ENCODE measurements at regions of chr12 and their contacts with region 1.

Region 1: GRCh38 chr12:70733385-70733784 is 96.2 kb upstream of the PTPRB start:
- DNase-seq: no peak
- ATAC-seq: peak in 2 of 4 donors; percentile 72 to 85
- H3K4me3 ChIP-seq: no peak overlapping the region
- H3K27ac ChIP-seq: no peak overlapping the region
- H3K4me1 ChIP-seq: no peaks in the 10 kb centered on the region
- H3K27me3 ChIP-seq: no peaks in the 10 kb centered on the region
- CTCF ChIP-seq: peak; percentile 64

Region 2: DNA sequence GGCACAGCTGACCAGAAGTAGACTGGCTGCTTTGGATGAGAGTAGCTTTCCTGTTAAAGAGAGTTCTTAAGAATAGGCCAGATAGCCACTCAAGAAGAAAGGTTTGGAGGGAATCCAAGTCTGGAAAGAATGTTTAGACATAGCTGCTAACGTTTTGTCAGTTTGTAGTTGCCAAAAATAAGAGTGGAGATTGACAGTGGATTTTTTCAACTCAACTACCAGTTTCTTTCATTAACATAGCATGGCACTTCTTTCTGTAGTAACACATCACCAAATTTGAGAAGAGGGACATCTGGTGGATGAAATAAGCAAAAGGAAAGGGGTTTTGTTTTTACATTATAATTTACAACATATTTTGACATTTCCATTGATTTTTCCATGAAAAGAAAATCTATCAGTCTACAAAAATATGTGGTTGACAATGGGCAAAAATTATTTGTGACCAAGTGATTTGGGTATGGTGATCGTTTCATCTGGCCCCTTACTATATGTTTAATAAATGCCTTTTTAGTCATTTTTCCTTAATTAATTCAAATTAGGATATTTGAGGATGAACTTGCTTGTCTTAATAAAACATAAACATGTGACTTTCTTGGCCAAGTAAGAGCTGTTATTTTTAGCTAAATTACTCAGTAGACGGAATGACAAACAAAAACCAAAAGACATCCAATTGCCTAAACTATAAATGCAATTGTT is 116.0 kb after region 1 on chr12:
- intact Hi-C with region 1: loop called in 1 of 2 experiments (anchors 5 kb)
- DNase-seq: no peak
- ATAC-seq: no peak
- H3K4me3 ChIP-seq: no peak overlapping the region
- H3K27ac ChIP-seq: no peak overlapping the region
- H3K4me1 ChIP-seq: no peaks in the 10 kb centered on the region
- H3K27me3 ChIP-seq: no peaks in the 10 kb centered on the region
- CTCF ChIP-seq: peak; percentile 42

Region 3: DNA sequence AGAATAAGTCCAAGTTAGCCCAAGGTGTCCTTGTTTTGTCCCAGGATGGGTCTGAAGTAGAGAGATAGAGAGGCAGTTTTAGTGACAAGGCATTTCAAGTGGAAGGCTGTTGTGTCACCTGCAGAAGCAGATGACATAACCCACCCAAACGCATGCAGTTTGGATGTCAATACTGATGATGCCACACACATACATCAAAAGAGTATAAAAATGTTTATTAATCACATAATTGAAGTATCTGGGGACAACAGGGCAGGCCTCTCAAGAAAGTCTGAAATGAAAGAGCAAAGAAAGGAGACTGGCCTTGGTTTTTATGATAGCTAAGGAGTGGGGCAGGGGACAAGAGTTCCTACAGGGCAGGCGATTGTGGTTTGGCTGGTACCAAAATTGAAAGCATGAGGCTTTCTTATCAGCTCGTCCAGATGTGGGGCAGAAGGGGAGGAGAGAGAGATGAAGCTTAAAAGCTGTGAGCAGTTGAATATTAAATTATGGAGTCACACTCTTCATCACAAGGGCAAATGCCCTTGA is 502.8 kb after region 1 on chr12:
- intact Hi-C with region 1: no loop called
- DNase-seq: no peak
- ATAC-seq: no peak
- H3K4me3 ChIP-seq: no peak overlapping the region
- H3K27ac ChIP-seq: no peak overlapping the region
- H3K4me1 ChIP-seq: no peaks in the 10 kb centered on the region
- H3K27me3 ChIP-seq: no peaks in the 10 kb centered on the region
- CTCF ChIP-seq: no peak

Measured in psoas muscle (tissue), 8 donors.